Calu3 (cell line): ENCODE measurements at regions of chr11 and their contacts with region 1.

Region 1: DNA sequence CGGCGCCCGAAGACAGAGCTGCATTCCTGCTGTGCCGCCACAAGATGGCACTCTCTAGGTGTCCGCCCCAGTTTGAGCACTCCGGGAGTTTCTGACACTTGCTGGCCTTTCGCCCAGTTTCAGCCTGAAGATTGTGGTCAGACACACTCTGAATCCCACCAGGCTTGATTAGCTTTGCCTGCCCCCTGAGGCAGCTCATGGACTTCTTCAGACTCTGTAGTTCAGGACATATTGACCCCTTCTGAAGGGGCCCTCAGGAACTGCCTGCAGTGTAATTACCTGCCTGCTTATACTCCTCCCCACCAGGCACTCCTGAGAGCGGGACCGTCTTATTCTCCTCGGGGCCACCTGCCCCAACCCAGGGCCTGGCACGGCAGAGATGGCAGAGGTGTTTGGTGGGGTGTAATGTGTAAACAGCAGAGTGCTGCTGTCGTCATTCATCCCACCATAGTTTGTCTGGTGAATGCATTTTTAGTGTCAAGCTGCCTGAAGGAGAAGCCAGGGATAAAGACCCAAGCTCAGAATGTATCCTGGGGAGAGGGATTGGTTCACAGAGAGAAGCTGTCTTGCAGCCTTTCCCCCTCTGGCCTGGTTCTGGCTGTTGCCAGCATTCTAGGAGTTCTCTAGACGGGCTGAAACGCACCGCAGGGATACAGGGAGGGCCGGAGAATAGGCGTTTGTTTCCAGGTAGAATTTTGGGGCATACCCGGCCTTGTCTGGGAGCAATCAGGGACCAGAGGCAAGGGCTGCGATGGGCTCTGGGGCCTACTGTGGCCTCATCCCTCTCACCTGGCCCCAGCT is 46.4 kb downstream of the EIF3F start:
- DNase-seq: peak; percentile 75
- H3K4me3 Mint-ChIP-seq: no peak overlapping the region
- H3K27ac Mint-ChIP-seq: no peak overlapping the region
- H3K4me1 Mint-ChIP-seq: peaks cover 9% of the 10 kb centered on the region
- H3K27me3 Mint-ChIP-seq: peaks cover 85% of the 10 kb centered on the region
- CTCF ChIP-seq: peak; percentile 89

Region 2: DNA sequence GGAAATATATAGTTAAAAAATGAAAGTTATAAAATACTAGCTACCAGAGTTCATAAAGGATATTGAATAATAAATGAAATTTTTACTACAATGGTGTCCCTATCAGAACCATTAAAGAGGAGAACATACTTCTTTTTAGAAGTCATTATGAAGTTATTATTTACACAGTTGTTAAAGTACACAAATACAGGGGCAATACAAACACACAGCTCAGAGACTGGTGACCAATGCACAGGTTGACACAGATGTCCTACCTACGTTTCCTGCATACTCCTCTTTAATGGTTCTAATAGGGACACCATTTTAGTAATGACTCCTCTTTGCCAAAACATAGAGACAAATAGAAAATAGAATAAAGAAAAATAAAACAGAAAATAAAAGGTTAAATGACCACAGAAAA is 78.3 kb before region 1 on chr11:
- CTCF ChIA-PET with region 1: no interaction called
- intact Hi-C with region 1: no loop called
- DNase-seq: no peak
- H3K4me3 Mint-ChIP-seq: no peak overlapping the region
- H3K27ac Mint-ChIP-seq: no peak overlapping the region
- H3K4me1 Mint-ChIP-seq: no peaks in the 10 kb centered on the region
- H3K27me3 Mint-ChIP-seq: peaks cover 22% of the 10 kb centered on the region
- CTCF ChIP-seq: no peak

Region 3: GRCh38 chr11:7982582-7983119 is 50.9 kb before region 1 on chr11:
- CTCF ChIA-PET with region 1: no interaction called
- intact Hi-C with region 1: no loop called
- DNase-seq: no peak
- H3K4me3 Mint-ChIP-seq: no peak overlapping the region
- H3K27ac Mint-ChIP-seq: no peak overlapping the region
- H3K4me1 Mint-ChIP-seq: peaks cover 14% of the 10 kb centered on the region
- H3K27me3 Mint-ChIP-seq: no peaks in the 10 kb centered on the region
- CTCF ChIP-seq: no peak

Region 4: DNA sequence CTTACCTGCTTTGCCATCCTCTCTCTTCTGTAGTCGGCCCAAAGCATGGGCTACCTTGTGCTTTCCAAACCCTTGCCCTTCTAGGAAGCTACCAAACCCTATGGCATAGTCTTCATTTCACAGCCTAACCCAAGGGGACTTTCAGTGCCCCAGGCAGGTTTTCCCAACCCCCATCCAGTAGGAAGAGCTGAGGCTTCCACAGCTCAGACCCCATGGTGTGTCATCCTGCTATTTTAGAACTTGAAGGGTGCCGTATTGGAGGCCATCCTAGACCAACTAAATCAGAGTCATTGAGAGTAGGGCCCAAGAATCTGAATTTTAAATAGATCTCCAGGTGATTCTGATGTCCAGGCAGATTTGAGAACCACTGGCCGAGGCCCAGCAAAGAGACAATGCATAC is 15.6 kb after region 1 on chr11:
- CTCF ChIA-PET with region 1: no interaction called
- intact Hi-C with region 1: no loop called
- DNase-seq: no peak
- H3K4me3 Mint-ChIP-seq: no peak overlapping the region
- H3K27ac Mint-ChIP-seq: no peak overlapping the region
- H3K4me1 Mint-ChIP-seq: no peaks in the 10 kb centered on the region
- H3K27me3 Mint-ChIP-seq: peaks cover 69% of the 10 kb centered on the region
- CTCF ChIP-seq: no peak

Region 5: DNA sequence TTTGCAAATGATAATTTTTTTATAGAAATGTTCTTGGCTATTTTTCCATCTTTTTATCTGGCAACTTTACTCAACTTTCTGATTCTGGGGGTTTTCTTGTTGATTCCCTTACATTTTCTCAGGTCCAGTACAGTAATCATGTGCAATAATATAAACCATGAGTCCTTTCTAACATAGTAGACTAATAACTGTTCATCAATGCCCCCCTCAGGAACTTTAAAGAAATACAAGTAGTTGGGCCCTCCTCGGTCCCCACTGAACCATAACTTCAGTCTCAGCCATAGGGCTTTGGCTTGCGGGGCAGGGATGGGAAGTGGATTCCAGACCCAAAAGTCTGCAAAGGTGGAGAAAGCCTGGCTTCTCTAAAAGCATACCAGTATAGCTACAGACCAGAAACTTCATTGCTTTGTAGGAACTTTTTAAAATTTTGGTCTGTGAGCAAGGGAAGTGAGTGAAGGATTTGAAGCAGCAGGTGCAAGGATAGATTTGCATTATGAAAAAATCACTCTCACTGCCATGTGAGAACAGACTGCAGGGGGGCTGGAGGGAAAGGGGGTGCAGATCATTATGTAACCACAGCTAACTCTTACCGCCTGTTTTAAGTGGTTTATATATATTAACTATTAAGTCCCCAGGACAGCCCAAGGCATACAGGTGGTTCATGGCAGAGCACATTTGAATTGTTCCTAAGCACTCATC is 37.1 kb after region 1 on chr11:
- CTCF ChIA-PET with region 1: interaction called, 6 read pairs
- intact Hi-C with region 1: loop called (anchors 2 kb)
- DNase-seq: no peak
- H3K4me3 Mint-ChIP-seq: no peak overlapping the region
- H3K27ac Mint-ChIP-seq: no peak overlapping the region
- H3K4me1 Mint-ChIP-seq: peaks cover 10% of the 10 kb centered on the region
- H3K27me3 Mint-ChIP-seq: peaks cover 85% of the 10 kb centered on the region
- CTCF ChIP-seq: peak; percentile 18

Region 6: GRCh38 chr11:8092587-8093424 is 59.3 kb after region 1 on chr11:
- CTCF ChIA-PET with region 1: interaction called, 59 read pairs
- intact Hi-C with region 1: no loop called
- DNase-seq: peak; percentile 72
- H3K4me3 Mint-ChIP-seq: no peak overlapping the region
- H3K27ac Mint-ChIP-seq: no peak overlapping the region
- H3K4me1 Mint-ChIP-seq: no peaks in the 10 kb centered on the region
- H3K27me3 Mint-ChIP-seq: peaks cover 12% of the 10 kb centered on the region
- CTCF ChIP-seq: peak; percentile 56

Region 7: GRCh38 chr11:8480858-8481257 is 447.4 kb after region 1 on chr11:
- CTCF ChIA-PET with region 1: no interaction called
- intact Hi-C with region 1: no loop called
- DNase-seq: no peak
- H3K4me3 Mint-ChIP-seq: no peak overlapping the region
- H3K27ac Mint-ChIP-seq: no peak overlapping the region
- H3K4me1 Mint-ChIP-seq: no peaks in the 10 kb centered on the region
- H3K27me3 Mint-ChIP-seq: no peaks in the 10 kb centered on the region
- CTCF ChIP-seq: no peak